Pancreas (tissue), 10 donors: ENCODE measurements at regions of chr9 and their contacts with region 1.

Region 1: GRCh38 chr9:4353236-4353635 is 53.4 kb upstream of the GLIS3 start:
- DNase-seq: no peak
- ATAC-seq: no peak
- H3K4me3 ChIP-seq: no peak overlapping the region
- H3K27ac ChIP-seq: no peak overlapping the region
- H3K4me1 ChIP-seq: no peaks in the 10 kb centered on the region
- H3K27me3 ChIP-seq: no peaks in the 10 kb centered on the region
- CTCF ChIP-seq: no peak

Region 2: GRCh38 chr9:3240656-3241268 is 1112.5 kb before region 1 on chr9:
- intact Hi-C with region 1: loop called in 1 of 3 experiments (anchors 10 kb)
- DNase-seq: peak in 5 of 6 donors; percentile 40 to 75 (median 67)
- ATAC-seq: peak; percentile 86 to 98 (median 98)
- H3K4me3 ChIP-seq: no peak overlapping the region
- H3K27ac ChIP-seq: peak overlapping the region in 1 of 4 donors; percentile 28
- H3K4me1 ChIP-seq: peaks cover 0 to 14% (median 10%) of the 10 kb centered on the region in 3 donors
- H3K27me3 ChIP-seq: no peaks in the 10 kb centered on the region
- CTCF ChIP-seq: peak; percentile 55 to 78 (median 71)

Region 3: DNA sequence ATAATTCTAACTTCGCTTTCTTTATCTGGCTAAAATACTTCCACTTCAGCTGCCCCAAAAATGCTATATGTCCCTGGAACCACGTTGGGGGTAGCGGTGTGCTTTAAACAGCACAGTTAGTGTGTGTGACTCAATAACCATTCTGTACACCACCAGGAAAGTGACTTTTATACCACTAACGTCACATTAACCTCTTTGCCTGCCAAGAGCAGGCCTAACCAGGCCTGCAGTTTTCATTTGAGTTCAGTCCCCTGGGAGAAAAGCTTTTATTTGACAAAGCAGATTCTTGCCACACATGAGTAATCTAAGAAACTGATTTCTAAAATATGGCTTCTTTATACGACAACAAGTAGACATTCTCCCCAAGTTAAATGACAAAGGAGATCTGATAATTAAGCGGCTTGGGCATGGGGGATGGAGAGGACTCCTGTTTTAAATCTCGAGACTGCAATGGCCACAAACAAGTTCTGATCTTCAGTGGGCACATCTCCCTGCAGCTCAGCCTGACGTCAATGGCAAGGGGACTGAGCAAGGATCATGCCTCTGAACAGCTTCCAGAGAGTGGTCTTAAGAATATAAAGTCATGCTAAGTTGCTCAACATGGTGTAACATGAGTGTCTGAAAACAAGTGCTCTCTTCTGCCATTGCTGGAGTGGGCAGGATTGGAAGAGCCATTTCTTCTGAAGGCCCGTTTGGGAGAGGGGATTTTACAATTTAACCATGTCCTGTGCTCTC is 145.2 kb before region 1 on chr9:
- intact Hi-C with region 1: no loop called
- DNase-seq: no peak
- ATAC-seq: peak in 3 of 4 donors; percentile 36 to 63 (median 61)
- H3K4me3 ChIP-seq: no peak overlapping the region
- H3K27ac ChIP-seq: no peak overlapping the region
- H3K4me1 ChIP-seq: peaks cover 0 to 3% (median 0%) of the 10 kb centered on the region in 3 donors
- H3K27me3 ChIP-seq: no peaks in the 10 kb centered on the region
- CTCF ChIP-seq: no peak

Region 4: GRCh38 chr9:4289411-4290380 is 63.5 kb before region 1 on chr9:
- intact Hi-C with region 1: no loop called
- DNase-seq: no peak
- ATAC-seq: peak in 2 of 4 donors; percentile 49 to 60
- H3K4me3 ChIP-seq: no peak overlapping the region
- H3K27ac ChIP-seq: peak overlapping the region in 1 of 4 donors; percentile 67
- H3K4me1 ChIP-seq: peaks cover 0 to 17% (median 3%) of the 10 kb centered on the region in 3 donors
- H3K27me3 ChIP-seq: no peaks in the 10 kb centered on the region
- CTCF ChIP-seq: no peak

Region 5: DNA sequence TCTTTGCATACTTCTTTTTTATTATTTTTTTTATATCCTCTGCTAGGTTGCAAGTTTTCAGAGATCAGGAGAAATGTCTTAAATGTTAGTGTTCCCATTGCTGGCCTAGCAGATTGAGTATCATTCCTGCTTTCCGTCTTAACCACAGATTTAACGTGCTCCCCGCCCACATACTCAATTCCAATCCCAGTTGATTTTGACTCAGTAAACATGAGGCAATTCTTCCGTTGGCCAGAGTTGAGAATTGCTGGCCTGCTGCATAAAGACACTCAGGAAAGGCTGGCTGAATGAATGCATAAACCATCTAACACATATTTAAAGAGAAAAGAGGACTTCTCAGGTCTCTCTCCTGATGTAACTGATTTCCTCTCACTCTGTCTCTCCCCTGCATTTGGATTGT is 262.0 kb after region 1 on chr9:
- intact Hi-C with region 1: no loop called
- DNase-seq: no peak
- ATAC-seq: peak in 1 of 4 donors; percentile 44
- H3K4me3 ChIP-seq: no peak overlapping the region
- H3K27ac ChIP-seq: no peak overlapping the region
- H3K4me1 ChIP-seq: no peaks in the 10 kb centered on the region
- H3K27me3 ChIP-seq: no peaks in the 10 kb centered on the region
- CTCF ChIP-seq: no peak